ENCODE measurements at regions of chr14 and their contacts with region 1.

Region 1: GRCh38 chr14:53953002-53953827 is 3.4 kb downstream of the BMP4 start:
- DNase-seq: peak; percentile 80 to 89
- H3K4me3 ChIP-seq: peak overlapping the region; percentile 51
- H3K4me3 Mint-ChIP-seq: peak overlapping the region; percentile 100
- H3K27ac Mint-ChIP-seq: peak overlapping the region; percentile 80
- H3K4me1 ChIP-seq: peaks cover 14% of the 10 kb centered on the region
- H3K4me1 Mint-ChIP-seq: peaks cover 10% of the 10 kb centered on the region
- H3K27me3 ChIP-seq: no peaks in the 10 kb centered on the region
- H3K27me3 Mint-ChIP-seq: no peaks in the 10 kb centered on the region
- CTCF ChIP-seq: no peak

Region 2: GRCh38 chr14:53842938-53843337 is 110.3 kb before region 1 on chr14:
- CTCF ChIA-PET with region 1: no interaction called
- POLR2A ChIA-PET with region 1: no interaction called
- intact Hi-C with region 1: loop called (anchors 10 kb)
- DNase-seq: peak; percentile 81 to 82
- H3K4me3 ChIP-seq: no peak overlapping the region
- H3K4me3 Mint-ChIP-seq: no peak overlapping the region
- H3K27ac Mint-ChIP-seq: peak overlapping the region; percentile 68
- H3K4me1 ChIP-seq: peaks cover 45% of the 10 kb centered on the region
- H3K4me1 Mint-ChIP-seq: peaks cover 41% of the 10 kb centered on the region
- H3K27me3 ChIP-seq: no peaks in the 10 kb centered on the region
- H3K27me3 Mint-ChIP-seq: no peaks in the 10 kb centered on the region
- CTCF ChIP-seq: no peak

Region 3: DNA sequence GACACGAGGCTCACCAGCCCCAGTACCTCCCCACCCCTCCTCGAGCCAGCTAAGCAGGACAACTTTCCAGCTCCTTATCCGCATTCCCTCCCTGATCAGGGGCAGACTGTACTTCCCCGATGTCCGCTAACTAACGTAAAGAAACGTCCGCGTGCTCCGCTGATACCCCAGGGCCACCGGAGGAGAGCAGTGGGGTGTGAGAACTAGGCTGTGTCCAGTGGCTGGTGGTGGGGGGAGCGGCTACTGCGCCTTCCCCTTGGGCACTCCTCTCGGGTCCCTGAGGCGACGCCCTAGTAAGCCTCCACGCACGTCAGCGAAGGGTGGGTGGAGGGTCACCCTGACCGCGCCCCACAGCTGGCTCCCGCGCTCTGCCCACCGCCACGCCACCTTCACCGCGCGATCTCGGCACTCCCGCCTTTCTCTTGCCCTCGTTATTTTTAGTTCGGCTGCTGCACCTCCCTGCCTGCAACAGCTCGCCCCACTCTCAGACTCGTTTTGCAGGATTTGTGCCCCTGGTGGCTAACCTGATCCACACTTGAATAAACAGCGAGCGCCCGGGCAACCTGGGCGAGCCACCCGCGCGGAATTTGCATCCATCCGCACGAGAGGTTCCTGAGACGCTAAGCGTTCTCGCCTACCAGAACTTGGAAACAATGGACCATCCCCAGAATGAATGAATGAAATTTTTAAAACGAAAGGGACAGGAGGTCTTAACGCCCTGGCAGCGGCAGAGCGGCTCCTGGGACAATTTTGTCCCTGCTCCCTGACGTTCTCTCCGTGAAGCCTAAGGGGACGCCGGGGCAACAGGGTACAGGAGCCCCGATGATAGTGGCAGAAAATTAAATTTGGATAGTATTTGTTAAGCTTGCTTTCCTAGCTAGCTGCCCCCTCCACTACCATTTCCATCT is 10.4 kb after region 1 on chr14:
- CTCF ChIA-PET with region 1: interaction called, 10 read pairs
- POLR2A ChIA-PET with region 1: interaction called, 5 read pairs
- intact Hi-C with region 1: no loop called
- DNase-seq: peak; percentile 75 to 82
- H3K4me3 ChIP-seq: peak overlapping the region; percentile 51
- H3K4me3 Mint-ChIP-seq: peak overlapping the region; percentile 86
- H3K27ac Mint-ChIP-seq: peak overlapping the region; percentile 81
- H3K4me1 ChIP-seq: peaks cover 15% of the 10 kb centered on the region
- H3K4me1 Mint-ChIP-seq: peaks cover 14% of the 10 kb centered on the region
- H3K27me3 ChIP-seq: no peaks in the 10 kb centered on the region
- H3K27me3 Mint-ChIP-seq: no peaks in the 10 kb centered on the region
- CTCF ChIP-seq: peak in 1 of 2 experiments; percentile 43

Region 4: DNA sequence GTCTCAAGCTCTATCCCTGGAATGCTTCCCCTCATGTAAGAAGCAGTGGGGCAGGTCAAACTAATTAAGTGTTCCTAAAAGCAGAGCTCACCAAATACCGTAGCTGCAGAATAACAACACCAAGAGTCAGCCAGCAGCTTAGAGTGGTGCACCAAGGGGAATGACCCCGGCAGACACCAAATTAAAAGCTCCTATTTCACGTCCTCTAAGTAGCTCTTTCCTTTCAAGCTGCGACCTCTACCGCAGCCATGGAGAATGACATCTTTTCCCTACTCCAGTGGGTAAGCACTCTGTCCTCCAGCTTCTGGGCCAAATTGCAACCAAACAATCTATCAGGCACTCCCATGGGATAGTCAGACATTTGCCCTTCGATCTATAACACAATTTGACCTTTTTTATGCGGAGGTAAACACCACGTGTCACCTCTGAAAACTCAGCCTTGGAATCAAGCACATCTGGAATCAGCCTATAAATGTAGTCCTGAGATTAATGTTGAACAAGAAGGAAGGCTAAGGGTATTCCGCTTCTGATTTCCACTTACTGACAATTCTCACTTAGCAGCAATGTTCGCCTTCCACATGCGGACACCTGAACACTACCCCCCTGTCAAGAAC is 376.0 kb after region 1 on chr14:
- CTCF ChIA-PET with region 1: interaction called, 10 read pairs
- POLR2A ChIA-PET with region 1: interaction called, 8 read pairs
- intact Hi-C with region 1: no loop called
- DNase-seq: peak; percentile 51 to 53
- H3K4me3 ChIP-seq: no peak overlapping the region
- H3K4me3 Mint-ChIP-seq: no peak overlapping the region
- H3K27ac Mint-ChIP-seq: no peak overlapping the region
- H3K4me1 ChIP-seq: no peaks in the 10 kb centered on the region
- H3K4me1 Mint-ChIP-seq: peaks cover 5% of the 10 kb centered on the region
- H3K27me3 ChIP-seq: no peaks in the 10 kb centered on the region
- H3K27me3 Mint-ChIP-seq: no peaks in the 10 kb centered on the region
- CTCF ChIP-seq: peak; percentile 70 to 76

Measured in Caco-2 (cell line).